ENCODE measurements at regions of chr9 and their contacts with region 1.

Region 1: GRCh38 chr9:114906908-114907571 is 23.4 kb downstream of the TNFSF8 start:
- DNase-seq: no peak
- H3K4me3 Mint-ChIP-seq: peak overlapping the region; percentile 67
- H3K27ac Mint-ChIP-seq: peak overlapping the region; percentile 97
- H3K4me1 Mint-ChIP-seq: peaks cover 55% of the 10 kb centered on the region
- H3K27me3 Mint-ChIP-seq: no peaks in the 10 kb centered on the region

Region 2: DNA sequence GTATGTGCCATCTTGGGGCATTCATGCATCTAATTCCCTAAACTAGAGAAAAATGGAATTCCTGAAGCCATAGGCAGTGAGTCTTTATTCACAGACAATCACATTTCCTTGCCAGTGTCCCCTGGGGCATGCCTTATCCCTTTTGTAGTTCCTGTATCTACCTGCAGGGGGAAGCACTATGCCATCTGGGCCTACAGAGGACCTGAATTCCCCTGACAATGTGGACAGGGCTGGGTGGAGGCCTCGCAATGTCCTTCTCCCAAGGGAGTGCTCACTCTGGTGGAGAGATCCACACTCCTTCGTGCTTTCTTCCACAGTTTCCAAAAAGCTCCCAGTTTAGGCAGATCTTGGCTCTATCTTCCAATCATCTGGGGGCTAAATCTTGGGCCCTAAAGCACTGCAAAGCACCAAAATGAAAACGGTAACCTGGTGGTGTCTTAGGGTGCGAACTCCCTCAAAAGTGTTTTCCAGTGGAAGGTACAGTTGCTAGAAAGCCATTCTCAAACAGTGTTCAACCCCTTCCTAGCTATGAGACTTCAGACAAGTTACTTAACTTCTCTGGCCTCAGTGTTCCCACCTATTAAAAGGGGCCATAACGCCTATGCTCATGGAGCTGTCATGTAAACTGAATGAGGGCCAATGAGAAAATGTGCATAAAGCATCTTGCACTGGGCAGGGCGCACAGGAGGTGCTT is 419.3 kb before region 1 on chr9:
- intact Hi-C with region 1: loop called (anchors 10 kb)
- DNase-seq: peak; percentile 55
- H3K4me3 Mint-ChIP-seq: no peak overlapping the region
- H3K27ac Mint-ChIP-seq: peak overlapping the region; percentile 20
- H3K4me1 Mint-ChIP-seq: peaks cover 29% of the 10 kb centered on the region
- H3K27me3 Mint-ChIP-seq: no peaks in the 10 kb centered on the region

Region 3: GRCh38 chr9:114560956-114561355 is 346.1 kb before region 1 on chr9:
- intact Hi-C with region 1: no loop called
- DNase-seq: no peak
- H3K4me3 Mint-ChIP-seq: no peak overlapping the region
- H3K27ac Mint-ChIP-seq: no peak overlapping the region
- H3K4me1 Mint-ChIP-seq: no peaks in the 10 kb centered on the region
- H3K27me3 Mint-ChIP-seq: peaks cover 12% of the 10 kb centered on the region

Region 4: DNA sequence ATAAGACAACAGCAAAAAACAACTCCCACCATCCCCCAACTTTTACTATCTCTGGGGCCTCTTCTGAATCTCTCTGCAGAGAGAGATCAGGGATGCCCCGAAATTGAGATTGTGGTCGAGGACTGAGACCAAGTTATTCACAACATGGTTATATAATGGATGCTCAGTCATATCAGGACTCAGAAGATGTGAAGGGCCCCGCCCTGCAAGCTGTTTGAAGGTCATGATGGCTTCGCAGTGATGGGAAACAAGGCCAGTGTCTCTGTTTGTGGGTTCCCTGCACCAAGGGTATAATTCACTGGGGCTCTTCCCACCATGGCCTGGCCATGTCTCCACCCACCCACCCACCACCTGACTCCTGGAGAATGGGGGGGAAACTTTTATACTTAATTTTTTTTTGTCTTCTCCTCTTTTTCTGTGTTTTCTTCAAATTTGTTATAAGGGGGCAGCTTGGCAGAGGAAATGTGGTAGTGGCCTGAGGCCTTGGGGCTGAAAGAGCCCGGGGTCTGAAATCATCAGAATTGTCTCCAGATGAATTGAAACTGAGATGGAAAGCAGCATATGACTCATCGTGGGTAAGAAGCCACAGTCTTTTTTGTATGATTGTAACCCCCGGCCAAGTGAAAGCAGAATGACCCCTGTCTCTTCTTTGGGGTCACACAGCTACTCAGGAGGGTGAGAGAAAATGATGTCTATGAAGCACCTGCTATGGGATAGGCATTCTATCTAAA is 210.1 kb before region 1 on chr9:
- intact Hi-C with region 1: loop called (anchors 1 kb)
- DNase-seq: peak; percentile 80
- H3K4me3 Mint-ChIP-seq: peak overlapping the region; percentile 46
- H3K27ac Mint-ChIP-seq: peak overlapping the region; percentile 95
- H3K4me1 Mint-ChIP-seq: peaks cover 92% of the 10 kb centered on the region
- H3K27me3 Mint-ChIP-seq: no peaks in the 10 kb centered on the region

Region 5: DNA sequence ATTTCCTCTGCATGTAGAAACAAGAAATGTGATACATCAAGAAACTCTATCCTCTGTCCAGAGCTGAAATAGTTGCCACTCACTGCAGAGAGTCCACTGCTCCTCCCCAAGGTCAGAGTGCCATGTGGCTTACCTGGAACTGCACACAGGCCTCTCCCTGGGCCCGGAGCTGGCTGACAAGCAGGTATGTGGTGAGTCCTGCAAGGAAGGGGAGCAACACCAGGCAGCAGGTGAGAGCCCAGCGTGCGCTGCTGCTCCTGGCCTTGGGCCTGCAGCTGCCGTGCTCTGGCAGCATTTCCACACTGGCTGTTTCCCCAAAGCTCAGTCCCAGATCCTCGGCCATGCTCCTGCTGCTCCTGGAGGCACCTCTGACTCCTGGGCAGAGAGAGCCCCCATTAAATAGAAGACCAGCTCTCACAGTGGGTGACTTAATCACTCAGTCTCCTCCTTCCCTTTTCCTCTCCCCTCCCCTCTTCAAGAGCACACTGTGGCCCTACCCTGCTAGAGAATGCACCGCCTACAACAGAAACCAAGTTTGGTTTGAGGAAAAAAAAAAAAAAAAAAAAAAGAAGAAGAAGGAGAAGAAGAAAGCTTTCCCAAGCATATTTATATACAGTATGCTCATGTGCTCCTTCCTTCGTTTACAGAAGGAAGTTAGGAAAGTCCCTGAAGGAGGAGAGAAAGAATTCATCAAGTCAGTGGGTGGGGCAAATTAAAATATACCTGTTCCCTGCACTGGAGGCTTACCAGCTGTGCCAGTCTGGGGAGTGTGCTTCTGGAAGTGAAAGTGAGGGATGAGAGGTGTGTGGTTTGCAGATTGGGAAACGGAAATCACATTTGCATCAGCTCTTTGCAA is 101.1 kb before region 1 on chr9 and contains the start of gene TNFSF15:
- intact Hi-C with region 1: loop called (anchors 1 kb)
- DNase-seq: peak; percentile 22
- H3K4me3 Mint-ChIP-seq: peak within 1 kb of the TSS; percentile 74
- H3K27ac Mint-ChIP-seq: peak within 1 kb of the TSS; percentile 41
- H3K4me1 Mint-ChIP-seq: peaks cover 34% of the 10 kb centered on the region
- H3K27me3 Mint-ChIP-seq: no peaks in the 10 kb centered on the region
- total RNA-seq, gene TNFSF15: 1.4 and 1.5 TPM in 2 replicates

Region 6: GRCh38 chr9:114930056-114930812 is 23.2 kb after region 1 on chr9 and contains the start of gene TNFSF8:
- intact Hi-C with region 1: loop called (anchors 1 kb)
- DNase-seq: peak; percentile 73
- H3K4me3 Mint-ChIP-seq: peak within 1 kb of the TSS; percentile 98
- H3K27ac Mint-ChIP-seq: peak within 1 kb of the TSS; percentile 99
- H3K4me1 Mint-ChIP-seq: peaks cover 62% of the 10 kb centered on the region
- H3K27me3 Mint-ChIP-seq: no peaks in the 10 kb centered on the region
- total RNA-seq, gene TNFSF8: 200 and 207 TPM in 2 replicates

Region 7: DNA sequence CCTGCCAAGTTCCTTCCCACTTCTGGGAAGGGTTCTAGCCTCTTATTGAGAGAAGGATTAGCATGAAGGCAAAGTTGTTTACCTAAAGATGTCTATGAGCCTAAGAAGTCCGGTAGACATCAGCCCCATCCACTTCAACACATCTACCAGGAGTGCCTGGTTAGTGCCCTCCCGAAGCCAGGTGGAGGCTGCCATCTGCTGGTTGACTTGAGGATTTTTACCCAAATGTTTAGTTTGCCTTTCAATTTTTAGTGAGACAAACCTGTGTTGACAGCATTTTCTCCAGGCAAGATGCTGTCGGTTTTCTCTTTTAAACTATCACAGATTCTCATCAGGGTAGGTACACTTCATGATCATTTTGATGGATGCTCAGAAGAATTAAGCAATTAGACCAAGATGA is 107.0 kb after region 1 on chr9:
- intact Hi-C with region 1: loop called (anchors 1 kb)
- DNase-seq: peak; percentile 73
- H3K4me3 Mint-ChIP-seq: no peak overlapping the region
- H3K27ac Mint-ChIP-seq: peak overlapping the region; percentile 52
- H3K4me1 Mint-ChIP-seq: peaks cover 72% of the 10 kb centered on the region
- H3K27me3 Mint-ChIP-seq: peaks cover 3% of the 10 kb centered on the region